ENCODE measurements at regions of chr21 and their contacts with region 1.

Region 1: DNA sequence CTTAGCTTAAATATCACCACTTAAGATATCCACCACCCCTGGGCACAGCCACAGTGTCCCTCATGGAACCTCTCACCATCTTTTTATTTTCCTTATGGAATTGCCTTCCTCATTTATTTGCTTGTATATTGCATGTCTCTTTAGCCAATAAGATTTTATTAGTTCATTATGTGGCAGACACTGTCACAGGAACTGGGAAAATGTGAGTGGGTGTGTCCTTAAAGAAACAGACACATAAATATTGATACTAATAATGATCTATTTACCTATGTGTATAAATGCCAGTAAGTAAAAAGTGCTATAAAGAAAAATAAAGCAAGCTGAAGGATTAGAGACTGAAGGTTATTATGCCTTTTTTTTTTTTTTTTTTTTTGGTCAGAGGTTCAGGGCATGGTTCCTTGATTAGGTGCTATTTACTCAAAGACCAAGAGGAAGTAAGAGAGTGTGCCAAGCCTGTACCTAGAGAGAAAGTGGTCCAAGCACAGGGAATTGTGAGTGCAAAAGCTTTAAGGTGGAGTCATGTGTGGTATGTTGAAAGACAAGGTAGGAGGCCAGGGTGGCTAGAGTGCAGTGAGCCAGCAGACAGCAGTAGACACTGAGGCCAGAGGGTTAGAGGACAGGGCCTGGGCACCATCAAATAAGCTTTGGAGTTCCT is 589.0 kb downstream of the USP25 start:
- DNase-seq: no peak
- ATAC-seq: no peak
- H3K4me3 ChIP-seq: no peak overlapping the region
- H3K4me3 Mint-ChIP-seq: no peak overlapping the region
- H3K27ac ChIP-seq: no peak overlapping the region
- H3K27ac Mint-ChIP-seq: no peak overlapping the region
- H3K4me1 ChIP-seq: peaks cover 0 to 2% of the 10 kb centered on the region in 2 experiments
- H3K4me1 Mint-ChIP-seq: peaks cover 0 to 6% (median 0%) of the 10 kb centered on the region in 3 donors
- H3K27me3 ChIP-seq: no peaks in the 10 kb centered on the region
- H3K27me3 Mint-ChIP-seq: no peaks in the 10 kb centered on the region

Region 2: GRCh38 chr21:16302851-16303282 is 15.9 kb before region 1 on chr21:
- CTCF ChIA-PET with region 1: no interaction called
- POLR2A ChIA-PET with region 1: interaction called in 1 of 2 experiments, 12 read pairs
- DNase-seq: no peak
- ATAC-seq: no peak
- H3K4me3 ChIP-seq: no peak overlapping the region
- H3K4me3 Mint-ChIP-seq: no peak overlapping the region
- H3K27ac ChIP-seq: no peak overlapping the region
- H3K27ac Mint-ChIP-seq: no peak overlapping the region
- H3K4me1 ChIP-seq: no peaks in the 10 kb centered on the region
- H3K4me1 Mint-ChIP-seq: no peaks in the 10 kb centered on the region
- H3K27me3 ChIP-seq: no peaks in the 10 kb centered on the region
- H3K27me3 Mint-ChIP-seq: no peaks in the 10 kb centered on the region

Measured in T-cell (primary cell).